Caco-2 (cell line): ENCODE measurements at regions of chr19 and their contacts with region 1.

Region 1: GRCh38 chr19:42140125-42140754 is 8.0 kb upstream of the POU2F2 start:
- DNase-seq: peak; percentile 54 to 76
- H3K4me3 ChIP-seq: no peak overlapping the region
- H3K4me3 Mint-ChIP-seq: no peak overlapping the region
- H3K27ac Mint-ChIP-seq: no peak overlapping the region
- H3K4me1 ChIP-seq: no peaks in the 10 kb centered on the region
- H3K4me1 Mint-ChIP-seq: no peaks in the 10 kb centered on the region
- H3K27me3 ChIP-seq: no peaks in the 10 kb centered on the region
- H3K27me3 Mint-ChIP-seq: peaks cover 14% of the 10 kb centered on the region
- CTCF ChIP-seq: no peak

Region 2: GRCh38 chr19:42154471-42155323 is 14.5 kb after region 1 on chr19:
- CTCF ChIA-PET with region 1: no interaction called
- POLR2A ChIA-PET with region 1: no interaction called
- intact Hi-C with region 1: no loop called
- DNase-seq: no peak
- H3K4me3 ChIP-seq: no peak overlapping the region
- H3K4me3 Mint-ChIP-seq: no peak overlapping the region
- H3K27ac Mint-ChIP-seq: no peak overlapping the region
- H3K4me1 ChIP-seq: 0 out of 2 replicates have a peak, but pooled peaks cover 3% of the 10 kb centered on the region
- H3K4me1 Mint-ChIP-seq: no peaks in the 10 kb centered on the region
- H3K27me3 ChIP-seq: no peaks in the 10 kb centered on the region; the same call in 1 of the 2 replicates
- H3K27me3 Mint-ChIP-seq: peaks cover 26% of the 10 kb centered on the region
- CTCF ChIP-seq: no peak

Region 3: GRCh38 chr19:42176990-42177685 is 36.9 kb after region 1 on chr19:
- CTCF ChIA-PET with region 1: interaction called, 5 read pairs
- POLR2A ChIA-PET with region 1: no interaction called
- intact Hi-C with region 1: loop called (anchors 5 kb)
- DNase-seq: peak; percentile 74 to 89
- H3K4me3 ChIP-seq: peak overlapping the region; percentile 19
- H3K4me3 Mint-ChIP-seq: no peak overlapping the region
- H3K27ac Mint-ChIP-seq: no peak overlapping the region
- H3K4me1 ChIP-seq: peaks cover 8% of the 10 kb centered on the region; the same call in 1 of the 2 replicates
- H3K4me1 Mint-ChIP-seq: peaks cover 8% of the 10 kb centered on the region
- H3K27me3 ChIP-seq: peaks cover 8% of the 10 kb centered on the region
- H3K27me3 Mint-ChIP-seq: peaks cover 19% of the 10 kb centered on the region
- CTCF ChIP-seq: peak; percentile 41 to 52